GM12878 (cell line): ENCODE measurements at regions of chr20 and their contacts with region 1.

Region 1: DNA sequence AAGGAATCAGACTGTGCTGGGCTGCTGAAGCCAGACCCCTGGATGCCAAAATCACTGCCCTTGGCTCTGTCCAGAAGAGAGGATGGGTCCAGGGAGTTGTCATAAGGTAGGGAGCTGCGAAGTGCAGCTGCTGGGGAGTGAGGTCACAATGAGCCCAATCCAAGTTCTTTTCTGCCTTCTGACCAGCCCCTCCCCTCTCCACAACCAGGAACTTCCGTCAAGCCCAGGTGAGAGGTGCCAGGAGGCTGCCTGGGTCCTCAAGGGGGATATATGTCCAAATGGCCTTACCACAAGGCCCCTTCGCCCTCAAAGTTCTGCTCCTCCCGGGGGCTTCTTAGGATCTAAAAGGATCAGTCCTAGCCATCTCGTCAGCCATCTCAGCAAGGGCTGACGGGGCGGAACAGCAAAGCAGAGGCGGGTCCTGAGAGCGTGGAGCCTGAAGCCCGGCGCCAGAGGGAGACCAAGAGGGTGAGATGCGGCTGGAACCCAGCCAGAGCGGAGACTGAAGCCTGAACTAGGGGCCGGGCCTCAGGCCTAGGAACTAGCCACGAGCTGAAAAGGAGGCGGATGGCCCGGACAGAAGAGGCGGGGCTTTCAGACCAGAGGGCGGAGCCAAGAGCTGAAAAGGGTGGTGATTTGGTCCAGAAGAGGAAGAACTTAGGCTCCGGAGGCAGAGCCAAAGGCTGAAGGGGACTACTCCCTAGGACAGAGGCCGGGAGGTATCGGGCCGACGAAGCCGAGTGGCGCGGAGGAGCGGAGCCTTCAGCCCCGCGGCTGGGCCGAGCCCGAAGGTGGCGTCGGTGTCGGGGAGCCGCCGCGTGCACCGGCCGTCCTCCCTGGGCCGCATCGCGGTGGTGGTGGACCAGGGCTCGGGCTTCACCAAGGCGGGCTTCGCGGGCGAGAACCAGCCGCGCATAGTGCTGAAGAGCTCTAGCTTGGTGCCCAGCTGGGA is at the start of gene ACTL10:
- DNase-seq: peak; percentile 91
- ATAC-seq: peak; percentile 80
- H3K4me3 ChIP-seq: peak within 1 kb of the TSS; percentile 75
- H3K27ac ChIP-seq: peak within 1 kb of the TSS; percentile 65
- H3K4me1 ChIP-seq: peaks cover 29% of the 10 kb centered on the region
- H3K27me3 ChIP-seq: no peaks in the 10 kb centered on the region
- CTCF ChIP-seq: peak in 2 of 3 experiments; percentile 15 to 28; a peak in 2 of 6 replicates
- EP300 ChIP-seq: no peak
- POLR2A ChIP-seq: peak; percentile 79
- RAD21 ChIP-seq: no peak
- polyA plus RNA-seq, gene ACTL10: 0.16 to 0.46 TPM

Region 2: DNA sequence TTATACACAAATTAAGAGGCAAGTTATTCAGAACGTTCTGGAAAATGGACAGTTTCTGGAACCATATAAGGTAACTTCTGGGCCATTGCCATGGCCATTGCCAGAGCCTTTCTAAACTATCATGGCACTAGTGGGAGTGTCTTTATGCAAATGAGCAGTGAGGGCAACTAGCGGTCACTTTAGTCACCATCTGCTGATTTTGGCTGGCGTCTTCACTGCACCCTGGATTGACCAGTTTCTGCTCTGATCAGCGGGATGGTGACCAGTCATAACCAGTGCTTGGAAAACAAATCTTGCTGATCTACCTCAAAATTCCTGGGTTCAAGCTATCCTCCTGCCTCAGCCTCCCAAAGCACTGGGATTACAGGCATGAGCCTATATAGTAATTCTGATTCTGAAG is 215.7 kb before region 1 on chr20:
- CTCF ChIA-PET with region 1: interaction called, 30 read pairs
- POLR2A ChIA-PET with region 1: no interaction called
- RAD21 ChIA-PET with region 1: interaction called, 18 read pairs
- SMC1A ChIA-PET with region 1: interaction called, 5 read pairs
- in situ Hi-C with region 1: no loop called
- intact Hi-C with region 1: no loop called
- DNase-seq: no peak
- ATAC-seq: no peak
- H3K4me3 ChIP-seq: no peak overlapping the region
- H3K27ac ChIP-seq: no peak overlapping the region
- H3K4me1 ChIP-seq: no peaks in the 10 kb centered on the region
- H3K27me3 ChIP-seq: no peaks in the 10 kb centered on the region
- CTCF ChIP-seq: no peak
- EP300 ChIP-seq: no peak
- POLR2A ChIP-seq: no peak
- RAD21 ChIP-seq: no peak

Region 3: DNA sequence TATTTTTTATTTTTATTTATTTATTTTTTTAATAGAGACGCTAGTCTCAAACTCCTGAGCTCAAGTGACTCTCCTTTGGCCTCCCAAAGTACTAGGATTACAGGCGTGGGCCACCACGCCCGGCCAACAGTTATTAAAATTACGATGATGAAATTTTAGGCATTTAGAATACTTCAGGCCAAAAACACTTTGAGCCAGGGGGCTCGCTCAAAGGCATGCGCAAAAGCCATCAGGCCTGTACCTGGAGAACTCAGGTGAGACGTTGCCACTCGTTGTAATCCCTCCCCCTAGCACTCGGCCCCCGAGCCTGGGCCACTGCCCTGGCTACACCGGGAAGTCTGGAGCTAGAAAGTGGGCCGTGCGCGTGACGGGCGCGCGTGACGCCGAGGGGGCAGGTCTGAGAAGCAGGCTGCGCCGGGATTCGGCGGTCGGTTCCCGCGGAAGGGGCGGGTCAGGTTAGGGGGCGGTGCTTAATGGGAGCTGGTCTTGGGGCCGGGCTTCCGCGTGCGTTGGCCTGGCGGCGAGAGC is 177.0 kb before region 1 on chr20:
- CTCF ChIA-PET with region 1: interaction called, 17 read pairs
- POLR2A ChIA-PET with region 1: interaction called, 20 read pairs
- RAD21 ChIA-PET with region 1: interaction called, 21 read pairs
- SMC1A ChIA-PET with region 1: interaction called, 5 read pairs
- in situ Hi-C with region 1: no loop called
- intact Hi-C with region 1: no loop called
- DNase-seq: peak; percentile 74
- ATAC-seq: peak; percentile 98
- H3K4me3 ChIP-seq: peak overlapping the region; percentile 96
- H3K27ac ChIP-seq: peak overlapping the region; percentile 76
- H3K4me1 ChIP-seq: no peaks in the 10 kb centered on the region
- H3K27me3 ChIP-seq: no peaks in the 10 kb centered on the region
- CTCF ChIP-seq: no peak
- EP300 ChIP-seq: no peak
- POLR2A ChIP-seq: peak; percentile 96
- RAD21 ChIP-seq: no peak

Region 4: GRCh38 chr20:33638726-33639125 is 27.8 kb before region 1 on chr20:
- CTCF ChIA-PET with region 1: no interaction called
- POLR2A ChIA-PET with region 1: no interaction called
- RAD21 ChIA-PET with region 1: no interaction called
- SMC1A ChIA-PET with region 1: no interaction called
- in situ Hi-C with region 1: no loop called
- intact Hi-C with region 1: loop called (anchors 1 kb)
- DNase-seq: no peak
- ATAC-seq: no peak
- H3K4me3 ChIP-seq: no peak overlapping the region
- H3K27ac ChIP-seq: no peak overlapping the region
- H3K4me1 ChIP-seq: no peaks in the 10 kb centered on the region
- H3K27me3 ChIP-seq: no peaks in the 10 kb centered on the region
- CTCF ChIP-seq: no peak
- EP300 ChIP-seq: no peak
- POLR2A ChIP-seq: no peak
- RAD21 ChIP-seq: no peak

Region 5: DNA sequence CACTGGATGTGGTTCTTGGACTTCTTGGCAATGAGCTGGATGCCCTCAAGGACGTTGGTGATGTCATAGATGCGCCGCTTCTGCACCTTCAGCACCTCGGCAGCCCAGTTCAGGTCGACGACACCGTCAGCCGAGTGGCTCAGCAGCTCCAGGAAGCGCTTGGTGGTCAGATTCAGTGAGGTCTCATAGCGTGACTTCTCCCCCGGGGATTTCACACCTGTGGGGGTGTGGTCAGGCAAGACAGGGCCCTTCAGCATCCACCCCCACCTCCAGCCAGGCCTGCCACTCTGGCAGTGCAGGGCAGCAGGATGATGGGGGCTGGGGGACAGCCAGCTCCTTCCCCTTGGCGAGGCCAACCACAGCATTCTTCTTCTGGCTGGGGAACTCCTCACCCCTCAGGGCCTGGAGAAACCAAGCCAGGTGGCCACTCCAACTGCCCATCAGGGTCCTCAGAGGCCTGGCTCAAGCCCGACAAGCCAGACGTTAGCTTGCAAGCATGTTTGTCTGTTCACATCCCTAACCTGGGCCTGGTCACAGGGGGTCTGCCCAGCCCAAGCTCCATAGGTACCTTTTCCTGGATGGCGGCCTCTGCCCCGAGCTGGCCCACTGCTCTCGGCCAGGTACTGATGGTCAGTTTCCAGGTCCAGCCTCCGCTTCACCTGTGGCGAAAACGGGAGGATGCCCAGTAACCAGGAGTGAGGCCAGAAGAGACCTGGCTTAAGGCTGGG is 13.4 kb after region 1 on chr20:
- CTCF ChIA-PET with region 1: interaction called, 38 read pairs
- POLR2A ChIA-PET with region 1: interaction called, 8 read pairs
- RAD21 ChIA-PET with region 1: interaction called, 7 read pairs
- SMC1A ChIA-PET with region 1: interaction called, 12 read pairs
- in situ Hi-C with region 1: no loop called
- intact Hi-C with region 1: no loop called
- DNase-seq: peak; percentile 47
- ATAC-seq: peak; percentile 82
- H3K4me3 ChIP-seq: no peak overlapping the region
- H3K27ac ChIP-seq: peak overlapping the region; percentile 35
- H3K4me1 ChIP-seq: peaks cover 37% of the 10 kb centered on the region
- H3K27me3 ChIP-seq: no peaks in the 10 kb centered on the region
- CTCF ChIP-seq: no peak
- EP300 ChIP-seq: no peak
- POLR2A ChIP-seq: peak; percentile 64
- RAD21 ChIP-seq: no peak

Region 6: GRCh38 chr20:33731693-33732165 is 65.2 kb after region 1 on chr20 and contains the start of gene ZNF341:
- CTCF ChIA-PET with region 1: interaction called, 7 read pairs
- POLR2A ChIA-PET with region 1: interaction called, 5 read pairs
- RAD21 ChIA-PET with region 1: interaction called, 6 read pairs
- SMC1A ChIA-PET with region 1: interaction called, 5 read pairs
- in situ Hi-C with region 1: no loop called
- intact Hi-C with region 1: loop called (anchors 2 kb)
- DNase-seq: peak; percentile 16
- ATAC-seq: peak; percentile 83
- H3K4me3 ChIP-seq: peak within 1 kb of the TSS; percentile 82
- H3K27ac ChIP-seq: peak within 1 kb of the TSS; percentile 77
- H3K4me1 ChIP-seq: peaks cover 7% of the 10 kb centered on the region
- H3K27me3 ChIP-seq: no peaks in the 10 kb centered on the region
- CTCF ChIP-seq: peak; percentile 79 to 89 (median 84)
- EP300 ChIP-seq: no peak
- POLR2A ChIP-seq: peak; percentile 57; the same call in 1 of the 2 replicates
- RAD21 ChIP-seq: peak; percentile 56
- polyA plus RNA-seq, gene ZNF341: 0.18 to 0.46 TPM

Region 7: GRCh38 chr20:33826270-33826897 is 159.8 kb after region 1 on chr20:
- CTCF ChIA-PET with region 1: no interaction called
- POLR2A ChIA-PET with region 1: no interaction called
- RAD21 ChIA-PET with region 1: no interaction called
- SMC1A ChIA-PET with region 1: no interaction called
- in situ Hi-C with region 1: no loop called
- intact Hi-C with region 1: no loop called
- DNase-seq: no peak
- ATAC-seq: no peak; the same call in 2 of the 3 replicates
- H3K4me3 ChIP-seq: no peak overlapping the region
- H3K27ac ChIP-seq: no peak overlapping the region
- H3K4me1 ChIP-seq: peaks cover 9% of the 10 kb centered on the region
- H3K27me3 ChIP-seq: no peaks in the 10 kb centered on the region
- CTCF ChIP-seq: no peak
- EP300 ChIP-seq: no peak
- POLR2A ChIP-seq: no peak
- RAD21 ChIP-seq: no peak